ENCODE measurements at regions of chr7 and their contacts with region 1.

Region 1: DNA sequence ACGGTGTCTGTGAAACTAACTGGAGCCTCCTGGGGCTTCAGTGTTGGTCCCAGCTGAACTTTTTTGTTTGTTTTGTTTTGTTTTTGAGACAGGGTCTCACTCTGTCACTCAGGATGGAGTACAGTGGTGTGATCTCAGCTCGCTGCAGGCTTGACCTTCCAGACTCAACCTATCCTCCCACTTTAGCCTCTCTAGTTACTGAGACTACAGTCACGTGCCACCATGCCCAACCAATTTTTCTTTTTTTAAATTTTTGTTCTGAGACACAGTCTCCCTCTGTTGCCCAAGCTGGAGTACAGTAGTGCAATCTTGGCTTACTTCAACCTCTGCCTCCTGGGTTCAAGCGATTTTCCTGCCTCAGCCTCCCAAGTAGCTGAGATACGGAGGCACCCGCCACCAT is 13.4 kb upstream of the DNAJB6 start:
- DNase-seq: no peak
- H3K27ac ChIP-seq: no peak overlapping the region
- CTCF ChIP-seq: no peak

Region 2: DNA sequence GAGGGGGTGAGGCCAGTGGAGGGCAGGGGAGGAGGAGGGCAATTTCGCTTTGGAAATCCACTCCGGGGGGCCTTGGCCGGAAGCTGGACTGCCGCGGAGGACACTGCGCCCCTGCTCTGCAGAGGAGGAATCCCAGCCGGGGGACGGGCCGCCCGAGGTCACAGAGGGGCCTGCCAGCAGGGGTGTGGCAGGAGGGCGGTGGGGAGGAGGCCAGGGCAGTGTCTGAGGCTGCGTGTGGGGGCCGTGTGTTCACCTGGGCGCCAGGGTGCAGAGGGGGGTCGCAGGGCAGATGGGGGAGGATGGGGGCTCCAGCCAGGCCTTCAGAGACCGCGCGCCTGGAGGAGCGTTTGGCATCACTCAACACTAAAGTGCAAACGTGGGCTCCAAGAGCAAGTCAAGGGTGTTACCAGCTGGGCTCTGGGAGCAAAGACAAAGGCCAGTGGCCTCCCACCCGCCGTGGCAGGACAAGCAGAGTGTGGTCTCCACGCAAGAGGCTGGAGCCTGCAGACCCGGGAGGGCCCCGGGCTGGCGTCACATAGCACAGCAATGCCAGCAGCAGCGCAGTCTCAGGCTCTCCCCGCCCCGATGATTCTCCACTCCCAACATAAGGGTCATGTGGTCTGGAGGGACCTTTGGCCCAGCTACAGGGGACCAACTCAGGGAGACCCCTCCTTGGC is 31.9 kb before region 1 on chr7:
- CTCF ChIA-PET with region 1: no interaction called
- POLR2A ChIA-PET with region 1: interaction called, 10 read pairs
- DNase-seq: no peak
- H3K27ac ChIP-seq: peak overlapping the region; percentile 79
- CTCF ChIP-seq: no peak

Region 3: GRCh38 chr7:157397731-157398691 is 74.6 kb after region 1 on chr7:
- CTCF ChIA-PET with region 1: no interaction called
- POLR2A ChIA-PET with region 1: no interaction called
- DNase-seq: peak; percentile 9
- H3K27ac ChIP-seq: peak overlapping the region; percentile 46
- CTCF ChIP-seq: no peak; the same call in 1 of the 2 replicates